IMR-90 (cell line): ENCODE measurements at regions of chr11 and their contacts with region 1.

Region 1: DNA sequence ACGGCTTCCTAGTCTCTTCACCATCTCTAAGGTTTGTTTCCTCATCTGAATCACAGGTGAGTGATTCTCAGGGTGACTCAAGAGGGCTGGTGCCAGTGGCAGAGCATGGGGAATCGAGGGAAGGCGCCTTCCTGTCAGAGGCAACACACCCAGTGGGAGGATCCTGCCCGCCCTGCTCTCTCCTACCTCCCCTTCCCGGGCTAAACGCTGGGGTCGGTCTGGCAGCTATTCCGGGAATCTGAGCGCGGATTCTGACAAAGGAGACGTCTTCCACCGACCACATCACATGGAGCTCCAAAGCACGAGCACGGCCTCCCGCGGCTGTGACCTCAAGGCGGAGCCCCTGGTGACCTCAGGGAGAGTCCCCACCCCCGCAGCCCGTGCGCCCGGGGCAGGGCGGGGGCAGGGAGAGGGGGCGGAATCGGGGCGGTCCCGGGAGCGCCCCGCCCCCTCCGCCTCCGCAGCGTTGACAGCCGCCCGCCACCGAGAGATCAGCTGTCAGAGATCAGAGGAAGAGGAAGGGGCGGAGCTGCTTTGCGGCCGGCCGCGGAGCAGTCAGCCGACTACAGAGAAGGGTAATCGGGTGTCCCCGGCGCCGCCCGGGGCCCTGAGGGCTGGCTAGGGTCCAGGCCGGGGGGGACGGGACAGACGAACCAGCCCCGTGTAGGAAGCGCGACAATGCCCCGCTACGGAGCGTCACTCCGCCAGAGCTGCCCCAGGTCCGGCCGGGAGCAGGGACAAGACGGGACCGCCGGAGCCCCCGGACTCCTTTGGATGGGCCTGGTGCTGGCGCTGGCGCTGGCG is at the start of gene SMPD1:
- DNase-seq: peak; percentile 80
- ATAC-seq: peak; percentile 95
- H3K4me3 ChIP-seq: peak within 1 kb of the TSS; percentile 90
- H3K27ac ChIP-seq: peak within 1 kb of the TSS; percentile 76
- H3K4me1 ChIP-seq: peaks cover 6% of the 10 kb centered on the region
- H3K27me3 ChIP-seq: no peaks in the 10 kb centered on the region
- CTCF ChIP-seq: no peak
- POLR2A ChIP-seq: peak; percentile 65; the same call in 1 of the 2 replicates
- RAD21 ChIP-seq: no peak
- total RNA-seq, gene SMPD1: 17.5 and 19.5 TPM in 2 replicates

Region 2: GRCh38 chr11:6210274-6210955 is 179.7 kb before region 1 on chr11:
- CTCF ChIA-PET with region 1: no interaction called
- POLR2A ChIA-PET with region 1: no interaction called
- dilution Hi-C with region 1: no loop called
- in situ Hi-C with region 1: no loop called
- intact Hi-C with region 1: no loop called
- DNase-seq: peak; percentile 24
- ATAC-seq: peak; percentile 93
- H3K4me3 ChIP-seq: no peak overlapping the region
- H3K27ac ChIP-seq: no peak overlapping the region
- H3K4me1 ChIP-seq: peaks cover 10% of the 10 kb centered on the region; the same call in 1 of the 2 replicates
- H3K27me3 ChIP-seq: no peaks in the 10 kb centered on the region
- CTCF ChIP-seq: no peak
- POLR2A ChIP-seq: no peak
- RAD21 ChIP-seq: no peak

Region 3: GRCh38 chr11:6419009-6419631 is 29.0 kb after region 1 on chr11 and contains the start of gene APBB1:
- CTCF ChIA-PET with region 1: interaction called, 4 read pairs
- POLR2A ChIA-PET with region 1: no interaction called
- dilution Hi-C with region 1: no loop called
- in situ Hi-C with region 1: no loop called
- intact Hi-C with region 1: loop called (anchors 2 kb)
- DNase-seq: peak; percentile 48
- ATAC-seq: peak; percentile 87
- H3K4me3 ChIP-seq: peak within 1 kb of the TSS; percentile 96
- H3K27ac ChIP-seq: peak within 1 kb of the TSS; percentile 57; the same call in 1 of the 2 replicates
- H3K4me1 ChIP-seq: peaks cover 10% of the 10 kb centered on the region
- H3K27me3 ChIP-seq: peaks cover 4% of the 10 kb centered on the region; the same call in 1 of the 2 replicates
- CTCF ChIP-seq: 0 out of 2 replicates have a peak, but pooled peaks have one; percentile 12
- POLR2A ChIP-seq: no peak
- RAD21 ChIP-seq: peak; percentile 24; the same call in 1 of the 2 replicates
- total RNA-seq, gene APBB1: 39.4 and 40.3 TPM in 2 replicates

Region 4: DNA sequence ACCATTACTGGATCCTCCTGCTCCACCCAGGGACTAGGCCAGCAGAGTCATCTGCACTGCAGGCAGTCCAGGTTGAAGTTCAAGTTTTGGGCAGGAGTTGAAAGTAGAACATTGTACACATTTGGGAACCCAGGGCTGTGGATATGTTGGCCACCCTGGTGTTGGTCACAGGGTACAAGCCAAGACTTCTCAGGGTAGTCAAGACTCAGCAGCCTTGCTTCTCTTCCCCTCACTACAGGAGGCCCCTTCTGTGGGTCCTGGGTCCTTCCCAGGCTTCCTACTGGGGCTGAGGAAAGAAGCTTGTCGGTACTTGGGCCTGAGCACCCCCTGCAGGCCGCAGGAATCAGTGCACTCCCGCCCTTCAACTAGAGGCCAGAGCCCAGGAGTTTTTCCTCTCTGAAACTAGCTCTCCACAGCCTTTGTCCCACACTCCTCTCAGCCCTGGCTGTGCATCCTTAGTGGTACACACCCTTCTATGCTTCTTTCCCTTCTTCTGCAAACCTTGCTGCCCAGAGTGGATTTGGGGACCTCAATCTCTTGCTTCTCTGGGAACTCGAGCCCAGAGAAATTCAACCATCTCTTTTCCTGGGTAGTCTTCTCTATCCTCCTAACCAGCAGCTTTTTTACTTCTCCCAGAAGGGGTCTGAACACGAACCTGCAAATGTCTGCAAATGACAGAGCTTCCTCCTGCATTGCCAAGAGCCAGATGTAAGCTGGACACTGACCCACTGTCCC is 53.3 kb after region 1 on chr11:
- CTCF ChIA-PET with region 1: interaction called, 16 read pairs
- POLR2A ChIA-PET with region 1: interaction called, 5 read pairs
- dilution Hi-C with region 1: no loop called
- in situ Hi-C with region 1: no loop called
- intact Hi-C with region 1: no loop called
- DNase-seq: peak; percentile 50
- ATAC-seq: peak; percentile 98
- H3K4me3 ChIP-seq: no peak overlapping the region
- H3K27ac ChIP-seq: no peak overlapping the region
- H3K4me1 ChIP-seq: no peaks in the 10 kb centered on the region
- H3K27me3 ChIP-seq: no peaks in the 10 kb centered on the region
- CTCF ChIP-seq: peak; percentile 79
- POLR2A ChIP-seq: no peak
- RAD21 ChIP-seq: peak; percentile 80

Region 5: DNA sequence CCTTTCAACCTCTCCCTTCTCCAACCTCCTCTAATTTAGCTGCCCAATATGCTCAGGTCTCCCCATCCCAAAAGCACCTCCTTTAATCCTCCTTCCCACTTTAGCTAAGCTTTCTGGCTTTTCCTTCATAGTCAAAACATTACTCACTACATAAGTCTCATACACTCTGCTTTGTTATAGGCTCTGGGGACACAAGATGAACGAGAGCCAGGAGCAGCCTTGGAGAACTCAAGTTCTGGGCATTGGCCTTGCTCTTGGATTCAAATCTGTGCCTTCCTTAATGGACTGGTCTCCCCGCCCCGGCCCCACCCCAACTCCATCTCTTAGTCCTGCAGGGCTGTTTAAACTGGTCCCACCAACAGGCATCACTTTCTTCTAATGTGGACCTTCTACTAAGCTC is 62.1 kb after region 1 on chr11:
- CTCF ChIA-PET with region 1: no interaction called
- POLR2A ChIA-PET with region 1: interaction called, 15 read pairs
- dilution Hi-C with region 1: no loop called
- in situ Hi-C with region 1: no loop called
- intact Hi-C with region 1: no loop called
- DNase-seq: peak; percentile 19
- ATAC-seq: peak; percentile 51
- H3K4me3 ChIP-seq: no peak overlapping the region
- H3K27ac ChIP-seq: no peak overlapping the region
- H3K4me1 ChIP-seq: no peaks in the 10 kb centered on the region
- H3K27me3 ChIP-seq: no peaks in the 10 kb centered on the region
- CTCF ChIP-seq: no peak
- POLR2A ChIP-seq: no peak
- RAD21 ChIP-seq: no peak